Mammary epithelial cell (primary cell): ENCODE measurements at regions of chr9 and their contacts with region 1.

Region 1: DNA sequence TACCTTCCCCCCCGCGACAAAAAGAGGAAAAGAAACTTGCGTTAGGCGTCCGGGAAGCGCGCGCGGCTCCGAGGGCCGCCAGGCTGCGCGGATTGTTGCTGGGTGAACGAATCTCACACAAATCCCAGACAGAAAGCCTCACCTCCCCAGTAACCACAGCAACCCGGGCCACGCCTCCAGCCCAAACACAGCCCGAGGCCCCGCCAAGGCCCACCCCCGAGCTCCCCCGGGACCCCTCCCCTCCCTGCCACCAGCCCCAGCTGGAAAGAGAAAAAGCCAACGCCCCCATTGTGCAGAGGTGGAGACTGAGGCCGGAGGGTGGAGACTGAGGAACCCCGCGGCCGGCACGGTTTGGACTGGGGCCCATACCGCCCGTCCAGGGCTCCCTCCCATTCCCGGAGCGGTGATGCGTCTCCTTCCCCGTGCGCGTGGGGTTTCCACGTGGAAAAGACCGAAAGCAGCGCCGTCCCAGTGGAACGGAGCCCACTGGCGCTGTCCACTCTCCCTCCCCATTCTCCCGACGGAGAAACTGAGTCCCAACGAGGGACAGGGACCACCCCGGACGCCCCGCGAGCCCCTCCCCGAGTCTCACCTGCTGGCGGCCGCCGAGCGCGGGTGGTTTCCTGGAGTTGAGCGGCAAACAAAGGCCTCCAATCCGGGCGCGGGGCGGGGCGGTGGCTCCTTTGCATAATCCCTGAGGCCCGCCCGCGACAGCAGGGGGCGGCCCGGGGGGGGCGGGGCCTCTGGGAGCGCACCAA is 10.2 kb upstream of the AKNA start:
- DNase-seq: peak; percentile 90
- H3K4me3 ChIP-seq: peak overlapping the region; percentile 43 to 68 (median 68)
- H3K27ac ChIP-seq: peak overlapping the region; percentile 68
- H3K4me1 ChIP-seq: peaks cover 24% of the 10 kb centered on the region
- H3K27me3 ChIP-seq: no peaks in the 10 kb centered on the region
- CTCF ChIP-seq: no peak

Region 2: DNA sequence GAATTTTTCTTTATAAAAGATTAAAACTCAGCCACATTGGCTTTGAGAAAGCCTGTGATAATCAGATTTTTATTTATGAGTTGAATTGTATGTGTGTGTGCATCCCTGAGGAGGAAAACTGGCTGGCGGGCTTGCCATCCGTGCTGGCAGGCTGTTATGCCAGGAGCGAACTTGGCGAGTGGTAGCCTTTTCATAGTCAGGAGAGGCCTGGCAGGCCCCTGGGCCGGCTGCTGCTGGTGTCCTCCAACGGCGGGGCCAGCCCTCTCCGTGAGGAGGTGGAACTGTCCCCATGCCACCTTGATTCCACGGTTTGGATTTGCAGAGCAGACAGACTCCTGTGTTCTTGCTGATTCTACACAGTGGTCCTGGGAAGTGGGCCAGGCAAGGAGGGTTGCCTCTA is 478.6 kb before region 1 on chr9:
- CTCF ChIA-PET with region 1: no interaction called
- dilution Hi-C with region 1: no loop called
- in situ Hi-C with region 1: no loop called
- intact Hi-C with region 1: no loop called
- DNase-seq: no peak
- H3K4me3 ChIP-seq: no peak overlapping the region
- H3K27ac ChIP-seq: no peak overlapping the region
- H3K4me1 ChIP-seq: no peaks in the 10 kb centered on the region
- H3K27me3 ChIP-seq: no peaks in the 10 kb centered on the region
- CTCF ChIP-seq: no peak

Region 3: GRCh38 chr9:114385412-114386181 is 12.4 kb before region 1 on chr9:
- CTCF ChIA-PET with region 1: no interaction called
- dilution Hi-C with region 1: no loop called
- in situ Hi-C with region 1: no loop called
- intact Hi-C with region 1: loop called (anchors 1 kb)
- DNase-seq: peak; percentile 97
- H3K4me3 ChIP-seq: no peak overlapping the region
- H3K27ac ChIP-seq: peak overlapping the region; percentile 67
- H3K4me1 ChIP-seq: peaks cover 31% of the 10 kb centered on the region
- H3K27me3 ChIP-seq: no peaks in the 10 kb centered on the region
- CTCF ChIP-seq: no peak

Region 4: GRCh38 chr9:114738581-114739316 is 340.7 kb after region 1 on chr9:
- CTCF ChIA-PET with region 1: no interaction called
- dilution Hi-C with region 1: no loop called
- in situ Hi-C with region 1: no loop called
- intact Hi-C with region 1: loop called (anchors 2 kb)
- DNase-seq: peak; percentile 78
- H3K4me3 ChIP-seq: no peak overlapping the region
- H3K27ac ChIP-seq: no peak overlapping the region
- H3K4me1 ChIP-seq: peaks cover 5% of the 10 kb centered on the region
- H3K27me3 ChIP-seq: no peaks in the 10 kb centered on the region
- CTCF ChIP-seq: peak; percentile 71 to 81